ENCODE measurements at regions of chr9 and their contacts with region 1.

Region 1: GRCh38 chr9:2559212-2560152 is 62.1 kb upstream of the VLDLR start:
- DNase-seq: peak; percentile 71 to 77
- ATAC-seq: peak; percentile 98 to 100 (median 99)
- H3K4me3 ChIP-seq: no peak overlapping the region
- H3K27ac ChIP-seq: peak overlapping the region; percentile 31
- H3K4me1 ChIP-seq: peaks cover 17% of the 10 kb centered on the region
- H3K27me3 ChIP-seq: no peaks in the 10 kb centered on the region
- CTCF ChIP-seq: no peak

Region 2: DNA sequence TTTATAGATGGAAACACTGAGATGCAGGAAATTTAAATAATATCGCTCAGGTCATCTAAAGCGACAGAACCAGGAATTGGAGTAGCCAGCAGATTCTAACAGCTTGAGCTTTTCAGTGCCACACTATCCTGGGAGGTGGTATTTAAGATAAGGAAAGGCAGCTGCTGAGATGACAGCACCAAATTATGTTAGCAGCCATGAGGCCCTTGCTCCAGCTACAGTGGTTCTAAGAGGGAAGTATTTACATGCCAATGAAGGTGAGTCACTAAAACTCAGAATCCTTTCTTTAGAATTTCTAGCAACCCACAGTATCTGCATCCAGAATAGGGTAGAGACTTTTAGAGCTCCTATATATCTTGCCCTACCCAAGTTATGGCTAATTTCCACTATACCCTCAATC is 64.9 kb before region 1 on chr9:
- intact Hi-C with region 1: loop called in 1 of 2 experiments (anchors 10 kb)
- DNase-seq: no peak
- ATAC-seq: peak in 2 of 4 donors; percentile 13 to 41
- H3K4me3 ChIP-seq: no peak overlapping the region
- H3K27ac ChIP-seq: no peak overlapping the region
- H3K4me1 ChIP-seq: peaks cover 28% of the 10 kb centered on the region
- H3K27me3 ChIP-seq: no peaks in the 10 kb centered on the region
- CTCF ChIP-seq: no peak

Region 3: DNA sequence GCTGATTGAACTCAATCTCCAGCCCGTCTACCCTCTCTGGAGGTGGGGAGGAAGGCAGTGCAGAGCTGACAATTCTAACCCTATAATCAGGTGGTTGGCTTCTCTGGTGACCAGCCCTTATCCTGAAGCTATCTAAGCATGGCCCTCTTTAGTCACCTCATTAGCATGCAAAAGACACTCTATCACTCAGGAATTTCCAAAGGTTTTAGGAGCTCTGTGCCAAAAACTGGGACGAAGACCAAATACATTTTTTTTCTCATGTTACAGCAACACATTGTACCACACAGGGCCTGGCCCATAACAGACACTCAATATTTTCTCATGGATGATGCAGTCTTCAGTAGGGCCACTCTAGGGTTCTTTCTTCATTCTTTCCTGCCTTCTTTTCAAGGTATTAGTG is 56.7 kb before region 1 on chr9:
- intact Hi-C with region 1: loop called (anchors 10 kb)
- DNase-seq: no peak
- ATAC-seq: peak; percentile 28 to 63 (median 46)
- H3K4me3 ChIP-seq: no peak overlapping the region
- H3K27ac ChIP-seq: no peak overlapping the region
- H3K4me1 ChIP-seq: no peaks in the 10 kb centered on the region
- H3K27me3 ChIP-seq: no peaks in the 10 kb centered on the region
- CTCF ChIP-seq: no peak

Region 4: GRCh38 chr9:2545881-2546490 is 13.5 kb before region 1 on chr9:
- intact Hi-C with region 1: loop called in 1 of 2 experiments (anchors 2 kb)
- DNase-seq: no peak
- ATAC-seq: no peak
- H3K4me3 ChIP-seq: no peak overlapping the region
- H3K27ac ChIP-seq: no peak overlapping the region
- H3K4me1 ChIP-seq: no peaks in the 10 kb centered on the region
- H3K27me3 ChIP-seq: no peaks in the 10 kb centered on the region
- CTCF ChIP-seq: no peak